Activated naive CD4-positive, alpha-beta T cell treated with anti-CD3 and anti-CD28 coated beads for 36 hours (primary cell): ENCODE measurements at regions of chr12 and their contacts with region 1.

Region 1: GRCh38 chr12:3073438-3074250 is 3.5 kb upstream of the TSPAN9 start:
- DNase-seq: peak; percentile 91
- H3K4me3 Mint-ChIP-seq: no peak overlapping the region
- H3K27ac Mint-ChIP-seq: no peak overlapping the region
- H3K4me1 Mint-ChIP-seq: peaks cover 5% of the 10 kb centered on the region
- H3K27me3 Mint-ChIP-seq: peaks cover 11% of the 10 kb centered on the region

Region 2: GRCh38 chr12:3275171-3276041 is 201.8 kb after region 1 on chr12:
- CTCF ChIA-PET with region 1: interaction called, 23 read pairs
- intact Hi-C with region 1: loop called (anchors 1 kb)
- DNase-seq: peak; percentile 82
- H3K4me3 Mint-ChIP-seq: no peak overlapping the region
- H3K27ac Mint-ChIP-seq: no peak overlapping the region
- H3K4me1 Mint-ChIP-seq: no peaks in the 10 kb centered on the region
- H3K27me3 Mint-ChIP-seq: no peaks in the 10 kb centered on the region